Activated naive CD4-positive, alpha-beta T cell treated with anti-CD3 and anti-CD28 coated beads for 36 hours (primary cell): ENCODE measurements at regions of chr14 and their contacts with region 1.

Region 1: GRCh38 chr14:103078093-103078749 is 5.8 kb upstream of the LBHD2 start:
- DNase-seq: peak; percentile 85
- H3K4me3 Mint-ChIP-seq: no peak overlapping the region
- H3K27ac Mint-ChIP-seq: no peak overlapping the region
- H3K4me1 Mint-ChIP-seq: no peaks in the 10 kb centered on the region
- H3K27me3 Mint-ChIP-seq: no peaks in the 10 kb centered on the region

Region 2: DNA sequence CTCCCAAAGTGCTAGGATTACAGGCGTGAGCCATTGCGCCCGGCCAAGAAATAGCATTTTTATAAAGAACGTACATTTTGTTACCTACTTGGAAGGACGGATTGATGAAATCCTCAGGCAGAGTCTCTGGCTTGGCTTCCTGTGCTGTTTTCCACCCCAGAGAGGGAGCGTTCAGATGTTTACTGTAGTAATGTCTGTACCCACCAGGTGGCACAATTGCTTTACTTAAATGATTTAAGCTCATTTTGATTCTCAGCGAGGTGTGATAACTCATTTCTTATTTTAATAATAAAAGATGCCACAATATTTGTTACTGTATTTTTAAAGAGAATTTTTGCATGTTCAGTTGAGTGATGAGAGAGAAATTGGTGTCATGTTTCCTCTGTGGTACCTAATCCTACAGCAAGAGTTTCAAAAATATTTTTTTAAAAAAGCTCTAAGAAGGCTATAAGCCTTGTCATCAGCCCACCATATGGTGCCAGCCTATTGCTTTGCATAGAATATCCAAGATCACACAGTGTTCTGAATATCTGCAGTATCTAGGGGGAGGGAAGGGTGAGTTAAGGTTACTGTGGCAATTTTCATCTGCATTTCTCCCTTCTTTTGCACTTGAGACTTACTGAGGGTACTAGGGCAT is 383.6 kb before region 1 on chr14:
- CTCF ChIA-PET with region 1: interaction called, 3 read pairs
- intact Hi-C with region 1: loop called (anchors 5 kb)
- DNase-seq: peak; percentile 78
- H3K4me3 Mint-ChIP-seq: no peak overlapping the region
- H3K27ac Mint-ChIP-seq: no peak overlapping the region
- H3K4me1 Mint-ChIP-seq: peaks cover 19% of the 10 kb centered on the region
- H3K27me3 Mint-ChIP-seq: no peaks in the 10 kb centered on the region

Region 3: DNA sequence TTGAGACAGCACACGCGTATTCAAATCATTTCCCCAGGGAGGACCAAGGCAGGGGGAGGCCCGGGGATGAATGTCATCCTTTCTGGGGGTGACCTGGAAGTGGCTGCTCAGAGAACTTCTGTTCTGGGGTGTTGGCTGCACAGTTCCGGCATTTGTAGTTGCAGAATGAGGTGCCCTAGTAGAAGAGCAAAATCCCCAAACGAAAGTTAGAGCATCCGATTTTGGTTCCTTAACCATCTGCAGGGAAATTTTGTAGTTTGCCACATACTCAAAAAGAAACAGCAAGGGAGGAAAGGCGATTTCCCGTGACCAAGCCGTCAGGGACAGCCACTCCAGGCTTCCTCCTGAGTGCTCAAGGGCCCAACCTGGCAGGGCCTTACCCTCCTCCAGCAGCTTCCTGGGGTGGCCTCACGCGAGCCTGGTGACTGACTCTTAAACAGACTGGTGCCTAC is 314.0 kb before region 1 on chr14:
- CTCF ChIA-PET with region 1: no interaction called
- intact Hi-C with region 1: no loop called
- DNase-seq: no peak
- H3K4me3 Mint-ChIP-seq: no peak overlapping the region
- H3K27ac Mint-ChIP-seq: no peak overlapping the region
- H3K4me1 Mint-ChIP-seq: peaks cover 8% of the 10 kb centered on the region
- H3K27me3 Mint-ChIP-seq: peaks cover 4% of the 10 kb centered on the region

Region 4: GRCh38 chr14:103057365-103058096 is 20.7 kb before region 1 on chr14 and contains the start of gene CDC42BPB:
- CTCF ChIA-PET with region 1: interaction called, 7 read pairs
- intact Hi-C with region 1: loop called (anchors 2 kb)
- DNase-seq: peak; percentile 49
- H3K4me3 Mint-ChIP-seq: peak within 1 kb of the TSS; percentile 74
- H3K27ac Mint-ChIP-seq: no peak within 1 kb of the TSS
- H3K4me1 Mint-ChIP-seq: peaks cover 8% of the 10 kb centered on the region
- H3K27me3 Mint-ChIP-seq: peaks cover 24% of the 10 kb centered on the region
- total RNA-seq, gene CDC42BPB: 2.5 to 3.2 TPM

Region 5: GRCh38 chr14:103104654-103105452 is 26.6 kb after region 1 on chr14:
- CTCF ChIA-PET with region 1: interaction called, 12 read pairs
- intact Hi-C with region 1: loop called (anchors 1 kb)
- DNase-seq: peak; percentile 71
- H3K4me3 Mint-ChIP-seq: no peak overlapping the region
- H3K27ac Mint-ChIP-seq: no peak overlapping the region
- H3K4me1 Mint-ChIP-seq: peaks cover 11% of the 10 kb centered on the region
- H3K27me3 Mint-ChIP-seq: peaks cover 34% of the 10 kb centered on the region

Region 6: DNA sequence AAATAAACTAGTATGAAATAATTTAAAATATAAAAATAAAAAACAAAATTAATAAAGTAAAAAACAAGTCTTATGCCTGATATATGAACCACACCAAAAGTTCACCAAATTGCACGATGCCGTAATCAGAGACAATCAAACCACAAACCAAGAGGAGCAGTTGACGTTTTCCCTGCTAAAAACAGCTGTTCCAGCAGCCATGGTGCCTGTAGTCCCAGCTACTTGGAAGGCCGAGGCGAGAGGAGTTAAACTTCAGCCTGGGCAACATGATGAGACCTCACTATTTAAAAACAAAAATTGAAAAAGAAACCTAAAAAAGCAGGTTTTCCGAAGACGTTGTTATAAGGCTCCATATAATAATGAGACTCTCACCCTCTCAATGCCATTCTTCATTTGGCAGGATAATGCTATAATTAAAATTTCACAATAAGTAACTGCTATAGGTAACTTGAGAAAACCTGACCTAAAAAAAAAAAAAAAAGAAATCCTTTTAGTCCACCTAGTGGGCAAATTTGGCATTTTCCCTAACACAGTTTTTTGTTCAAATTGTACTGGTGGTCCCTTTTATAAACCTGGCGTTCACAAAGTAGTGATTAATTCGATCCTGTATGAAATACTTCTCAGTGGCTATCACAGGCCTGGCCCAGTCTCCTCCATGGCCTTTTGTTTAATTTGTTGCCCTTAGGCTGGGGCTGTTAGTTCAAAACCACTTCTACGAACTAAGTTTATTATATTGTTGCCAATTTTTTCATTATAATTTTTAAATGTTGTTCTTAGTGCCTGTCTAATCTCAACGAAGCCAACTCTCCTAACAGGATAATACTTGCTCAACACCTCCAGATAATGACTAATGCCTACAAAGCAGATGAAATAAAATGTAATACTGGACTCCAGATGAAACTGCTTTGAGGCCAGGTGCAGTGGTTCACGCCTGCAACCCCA is 107.1 kb after region 1 on chr14:
- CTCF ChIA-PET with region 1: interaction called, 3 read pairs
- intact Hi-C with region 1: loop called (anchors 2 kb)
- DNase-seq: no peak
- H3K4me3 Mint-ChIP-seq: no peak overlapping the region
- H3K27ac Mint-ChIP-seq: no peak overlapping the region
- H3K4me1 Mint-ChIP-seq: peaks cover 8% of the 10 kb centered on the region
- H3K27me3 Mint-ChIP-seq: peaks cover 43% of the 10 kb centered on the region

Region 7: DNA sequence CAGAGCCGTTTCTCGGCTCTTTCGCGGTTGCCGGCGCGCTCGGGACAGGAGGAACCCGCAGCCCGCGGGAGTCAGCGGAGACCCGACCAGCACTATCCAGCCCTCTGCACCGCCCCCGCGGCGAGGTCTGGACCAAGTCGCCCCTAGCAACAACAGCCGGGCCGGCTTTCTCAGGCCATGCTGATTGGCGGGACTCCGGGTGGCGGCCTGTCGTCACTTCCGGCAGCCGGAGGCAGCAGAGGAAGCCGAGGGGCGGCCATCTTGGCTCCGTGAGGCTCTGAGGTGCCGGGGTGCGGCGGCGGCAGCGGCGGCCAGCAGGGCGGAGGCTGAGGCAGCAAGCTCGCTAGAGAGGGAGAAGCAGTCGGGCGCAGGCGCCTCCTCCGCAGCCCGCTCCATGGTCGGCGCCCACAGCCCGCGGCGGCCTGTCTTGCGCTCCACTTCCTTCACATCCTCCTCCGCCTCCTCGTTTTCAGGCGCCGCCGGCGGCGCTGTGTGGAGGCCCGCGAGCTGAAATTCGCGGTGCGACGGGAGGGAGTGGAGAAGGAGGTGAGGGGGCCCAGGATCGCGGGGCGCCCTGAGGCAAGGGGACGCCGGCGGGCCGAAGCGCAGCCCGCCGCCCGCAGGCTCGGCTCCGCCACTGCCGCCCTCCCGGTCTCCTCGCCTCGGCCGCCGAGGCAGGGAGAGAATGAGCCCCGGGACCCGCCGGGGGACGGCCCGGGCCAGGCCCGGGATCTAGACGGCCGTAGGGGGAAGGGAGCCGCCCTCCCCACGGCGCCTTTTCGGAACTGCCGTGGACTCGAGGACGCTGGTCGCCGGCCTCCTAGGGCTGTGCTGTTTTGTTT is 307.2 kb after region 1 on chr14 and contains the start of gene MARK3:
- CTCF ChIA-PET with region 1: no interaction called
- intact Hi-C with region 1: loop called (anchors 5 kb)
- DNase-seq: peak; percentile 97
- H3K4me3 Mint-ChIP-seq: peak within 1 kb of the TSS; percentile 96
- H3K27ac Mint-ChIP-seq: peak within 1 kb of the TSS; percentile 94
- H3K4me1 Mint-ChIP-seq: peaks cover 42% of the 10 kb centered on the region
- H3K27me3 Mint-ChIP-seq: peaks cover 4% of the 10 kb centered on the region
- total RNA-seq, gene MARK3: 62.2 to 64.7 TPM

Region 8: GRCh38 chr14:103788086-103788485 is 709.9 kb after region 1 on chr14:
- CTCF ChIA-PET with region 1: no interaction called
- intact Hi-C with region 1: no loop called
- DNase-seq: no peak
- H3K4me3 Mint-ChIP-seq: no peak overlapping the region
- H3K27ac Mint-ChIP-seq: no peak overlapping the region
- H3K4me1 Mint-ChIP-seq: no peaks in the 10 kb centered on the region
- H3K27me3 Mint-ChIP-seq: no peaks in the 10 kb centered on the region